KBM-7 (cell line): ENCODE measurements at regions of chr1 and their contacts with region 1.

Region 1: DNA sequence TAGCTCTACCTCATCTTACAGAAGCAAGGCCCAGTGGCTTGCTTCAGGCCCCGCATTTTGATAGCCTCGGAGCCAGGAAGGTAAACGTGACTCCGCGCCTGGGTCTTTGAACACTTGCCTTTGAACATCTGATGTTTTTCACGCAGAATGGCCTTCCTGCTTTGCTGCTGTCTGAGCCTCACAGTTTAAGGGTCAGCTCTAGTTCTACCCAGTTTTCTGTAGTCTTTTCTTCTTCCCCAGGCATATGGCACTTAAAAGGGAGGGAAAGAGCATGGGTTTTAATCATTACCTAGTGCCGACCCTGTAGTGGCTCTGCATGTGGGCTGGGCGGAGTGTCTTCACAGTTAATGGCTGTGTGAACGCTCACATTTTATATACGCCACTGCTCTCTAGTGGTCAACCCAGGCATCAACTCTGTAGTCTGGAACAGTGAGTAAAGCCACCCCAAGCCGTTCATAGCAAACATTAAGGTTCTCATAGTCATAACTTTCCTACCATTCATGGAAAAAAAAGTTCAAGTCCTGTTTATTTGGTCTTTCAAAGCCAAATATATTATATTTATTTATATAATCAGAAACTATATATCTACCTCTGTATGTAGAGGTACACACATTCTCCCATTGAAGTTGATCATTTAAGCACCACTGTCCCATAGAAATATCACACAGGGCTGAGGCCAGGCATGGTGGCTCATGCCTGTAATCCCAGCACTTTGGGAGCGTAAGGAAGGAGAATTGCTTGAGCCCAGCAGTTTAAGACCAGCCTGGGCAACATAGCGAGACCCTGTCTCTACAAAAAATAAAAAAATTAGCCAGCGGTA is 78.1 kb downstream of the IER5 start:
- DNase-seq: peak; percentile 81

Region 2: GRCh38 chr1:180502360-180503273 is 664.0 kb before region 1 on chr1 and contains the start of gene ACBD6:
- in situ Hi-C with region 1: loop called (anchors 25 kb)
- DNase-seq: peak; percentile 93

Region 3: GRCh38 chr1:180881806-180882509 is 284.6 kb before region 1 on chr1:
- in situ Hi-C with region 1: loop called (anchors 25 kb)
- DNase-seq: peak; percentile 52